ENCODE measurements at regions of chr21 and their contacts with region 1.

Region 1: GRCh38 chr21:38511662-38512243 is 13.5 kb upstream of the ERG start:
- DNase-seq: no peak
- ATAC-seq: no peak
- H3K4me3 ChIP-seq: no peak overlapping the region
- H3K27ac ChIP-seq: no peak overlapping the region
- H3K4me1 ChIP-seq: peaks cover 0 to 8% (median 4%) of the 10 kb centered on the region in 9 donors
- H3K27me3 ChIP-seq: no peaks in the 10 kb centered on the region
- CTCF ChIP-seq: no peak

Region 2: GRCh38 chr21:39153373-39153772 is 641.6 kb after region 1 on chr21:
- intact Hi-C with region 1: loop called in 1 of 10 experiments (anchors 10 kb)
- DNase-seq: no peak
- ATAC-seq: peak in 4 of 8 donors; percentile 38 to 68 (median 46)
- H3K4me3 ChIP-seq: no peak overlapping the region
- H3K27ac ChIP-seq: no peak overlapping the region
- H3K4me1 ChIP-seq: no peaks in the 10 kb centered on the region
- H3K27me3 ChIP-seq: no peaks in the 10 kb centered on the region
- CTCF ChIP-seq: peak in 7 of 9 donors; percentile 29 to 48 (median 35)

Measured in heart right ventricle (tissue), 16 donors.